Activated T-helper 1 cell treated with anti-CD3 and anti-CD28 coated beads, Interleukin-12 subunit alpha, Interleukin-12 subunit beta, Interleukin-2, Interleukin-4 antibody, amounts not matched to agents 30 ng/mL and 10 ng/mL and 1 ng/mL, durations not matched to agents 14 hours and 24 hours and 36 hours (primary cell): ENCODE measurements at regions of chr3 and their contacts with region 1.

Region 1: DNA sequence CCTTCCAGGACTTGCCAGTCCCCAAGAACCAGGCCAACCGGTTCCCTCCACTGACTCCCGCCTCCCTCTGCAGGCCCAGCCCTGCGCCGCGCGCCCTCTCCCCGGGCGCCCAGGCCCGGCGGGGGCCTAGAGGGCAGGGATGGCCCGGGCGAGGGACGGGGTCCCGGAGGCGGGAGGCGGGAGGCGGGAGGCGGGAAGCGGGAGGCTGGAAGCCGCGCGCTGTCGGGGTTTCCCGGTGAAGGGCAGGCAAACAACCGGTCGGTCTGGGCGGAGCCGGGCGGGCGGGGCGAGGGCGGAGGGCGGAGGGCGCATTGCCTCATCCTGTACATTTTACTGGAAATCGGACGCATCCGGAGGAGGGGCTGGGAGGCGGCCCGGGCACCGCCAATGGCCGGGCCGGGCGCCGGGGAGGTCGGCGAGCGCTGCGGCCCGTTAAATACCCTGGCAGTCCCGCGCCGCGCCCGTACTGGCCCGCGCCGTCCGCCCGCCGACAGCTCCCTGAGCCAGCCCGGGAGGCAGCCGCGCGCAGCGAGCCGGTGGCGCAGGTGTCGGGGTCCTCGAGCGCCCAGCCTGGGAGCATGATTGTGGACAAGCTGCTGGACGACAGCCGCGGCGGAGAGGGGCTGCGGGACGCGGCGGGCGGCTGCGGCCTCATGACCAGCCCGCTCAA is at the start of gene NFKBIZ:
- DNase-seq: peak; percentile 93
- H3K4me3 Mint-ChIP-seq: peak within 1 kb of the TSS; percentile 93
- H3K27ac Mint-ChIP-seq: peak within 1 kb of the TSS; percentile 96
- H3K4me1 Mint-ChIP-seq: peaks cover 50% of the 10 kb centered on the region
- H3K27me3 Mint-ChIP-seq: no peaks in the 10 kb centered on the region
- total RNA-seq, gene NFKBIZ: 72.4 and 79.7 TPM in 2 replicates

Region 2: GRCh38 chr3:101676765-101677435 is 172.3 kb before region 1 on chr3 and contains the start of gene ZBTB11:
- intact Hi-C with region 1: loop called (anchors 1 kb)
- DNase-seq: peak; percentile 99
- H3K4me3 Mint-ChIP-seq: peak within 1 kb of the TSS; percentile 96
- H3K27ac Mint-ChIP-seq: peak within 1 kb of the TSS; percentile 97
- H3K4me1 Mint-ChIP-seq: peaks cover 56% of the 10 kb centered on the region
- H3K27me3 Mint-ChIP-seq: no peaks in the 10 kb centered on the region
- total RNA-seq, gene ZBTB11: 29.0 and 31.9 TPM in 2 replicates

Region 3: DNA sequence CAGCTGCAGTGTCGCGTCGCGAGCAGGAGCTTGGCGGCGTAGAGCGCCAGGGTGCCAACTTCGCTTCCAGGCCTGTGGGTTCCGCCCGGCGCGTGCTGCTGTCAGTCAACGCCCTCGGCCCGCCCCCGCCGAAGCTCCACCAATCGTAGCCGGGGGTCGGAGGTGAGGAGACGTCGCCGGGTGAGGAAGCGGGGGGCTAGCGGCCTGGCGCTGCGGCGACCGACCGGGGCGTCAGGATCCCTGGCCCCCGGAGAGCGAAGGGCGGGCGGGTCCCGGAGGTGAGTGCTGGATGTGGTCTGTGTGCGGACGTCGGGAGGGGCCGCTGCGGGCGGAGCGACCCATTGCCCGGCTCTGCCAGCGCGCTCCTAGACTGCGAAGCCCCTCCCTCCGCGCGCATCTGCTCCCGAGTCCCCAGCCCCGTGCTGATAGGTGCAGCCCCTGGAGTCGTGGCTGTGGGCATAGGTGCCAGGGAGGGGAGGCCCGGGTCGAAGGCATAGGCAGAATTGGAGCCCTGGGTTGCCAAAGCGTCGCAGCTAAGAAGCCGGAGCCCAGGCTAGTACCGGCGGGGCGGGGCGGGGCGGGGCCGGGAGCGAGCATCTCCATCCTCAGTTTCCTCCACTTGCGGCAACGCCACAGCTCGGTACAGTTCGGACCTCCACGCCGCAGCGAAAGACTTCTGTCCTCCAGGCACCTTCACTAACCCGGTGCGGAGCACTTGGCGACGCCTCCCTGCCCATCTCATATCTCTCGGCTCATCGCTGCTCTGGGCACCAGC is 70.0 kb before region 1 on chr3 and contains the start of gene NXPE3:
- intact Hi-C with region 1: loop called (anchors 2 kb)
- DNase-seq: peak; percentile 92
- H3K4me3 Mint-ChIP-seq: peak within 1 kb of the TSS; percentile 96
- H3K27ac Mint-ChIP-seq: peak within 1 kb of the TSS; percentile 85
- H3K4me1 Mint-ChIP-seq: peaks cover 38% of the 10 kb centered on the region
- H3K27me3 Mint-ChIP-seq: no peaks in the 10 kb centered on the region
- total RNA-seq, gene NXPE3: 17.6 and 17.8 TPM in 2 replicates

Region 4: DNA sequence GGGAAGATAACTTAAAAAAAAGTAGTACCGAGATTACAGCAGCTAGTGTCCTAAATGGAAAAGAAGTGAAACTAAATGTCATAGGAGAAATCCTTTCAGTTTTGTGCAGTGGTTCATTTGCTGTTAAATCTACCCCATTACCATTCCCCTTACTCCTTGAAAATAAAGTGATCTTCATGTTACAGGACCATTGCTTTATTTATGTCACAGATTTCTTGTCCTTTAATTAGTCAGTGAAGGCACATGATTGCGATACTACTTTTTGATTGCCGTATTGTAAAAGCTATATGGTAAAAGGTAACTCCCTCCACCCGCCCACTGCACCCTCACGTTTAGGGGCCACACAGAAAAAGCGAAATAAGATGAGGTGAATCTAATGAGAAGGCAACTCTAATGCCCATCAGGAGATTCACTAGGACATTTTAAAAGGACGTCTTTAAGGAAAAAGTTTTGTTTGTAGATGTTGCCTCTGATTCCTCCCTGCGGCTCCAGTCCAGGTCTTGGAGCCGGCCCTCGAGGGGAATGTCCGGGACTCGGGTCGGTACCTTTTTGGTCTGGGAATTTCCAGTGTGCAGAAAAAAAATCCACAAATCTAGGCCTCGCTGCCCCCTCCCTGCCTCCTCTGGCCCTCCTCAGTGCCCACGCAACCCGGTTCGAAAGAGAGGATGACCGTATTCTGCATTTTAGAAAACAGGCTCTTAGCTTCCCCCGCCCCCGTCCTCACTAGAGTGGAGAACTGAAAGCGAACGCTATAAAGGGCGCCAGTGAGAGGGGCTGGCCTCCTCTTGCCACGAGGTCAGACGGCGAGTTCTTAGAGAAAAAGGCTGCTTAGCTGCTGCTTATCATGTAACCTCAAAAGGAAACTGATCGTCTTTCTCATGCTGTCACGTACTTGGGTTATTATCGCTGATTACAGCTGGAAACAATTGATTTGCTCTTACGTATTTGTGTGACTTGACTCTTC is 21.7 kb before region 1 on chr3:
- intact Hi-C with region 1: loop called (anchors 1 kb)
- DNase-seq: peak; percentile 77
- H3K4me3 Mint-ChIP-seq: peak overlapping the region; percentile 93
- H3K27ac Mint-ChIP-seq: peak overlapping the region; percentile 90
- H3K4me1 Mint-ChIP-seq: peaks cover 63% of the 10 kb centered on the region
- H3K27me3 Mint-ChIP-seq: no peaks in the 10 kb centered on the region

Region 5: GRCh38 chr3:101936419-101937356 is 87.5 kb after region 1 on chr3:
- intact Hi-C with region 1: loop called (anchors 1 kb)
- DNase-seq: peak; percentile 33
- H3K4me3 Mint-ChIP-seq: peak overlapping the region; percentile 65
- H3K27ac Mint-ChIP-seq: peak overlapping the region; percentile 77
- H3K4me1 Mint-ChIP-seq: peaks cover 33% of the 10 kb centered on the region
- H3K27me3 Mint-ChIP-seq: peaks cover 12% of the 10 kb centered on the region

Region 6: GRCh38 chr3:102113411-102114041 is 264.3 kb after region 1 on chr3:
- intact Hi-C with region 1: loop called (anchors 5 kb)
- DNase-seq: no peak
- H3K4me3 Mint-ChIP-seq: peak overlapping the region; percentile 4
- H3K27ac Mint-ChIP-seq: peak overlapping the region; percentile 67
- H3K4me1 Mint-ChIP-seq: peaks cover 41% of the 10 kb centered on the region
- H3K27me3 Mint-ChIP-seq: no peaks in the 10 kb centered on the region